ENCODE measurements at regions of chr3 and their contacts with region 1.

Region 1: DNA sequence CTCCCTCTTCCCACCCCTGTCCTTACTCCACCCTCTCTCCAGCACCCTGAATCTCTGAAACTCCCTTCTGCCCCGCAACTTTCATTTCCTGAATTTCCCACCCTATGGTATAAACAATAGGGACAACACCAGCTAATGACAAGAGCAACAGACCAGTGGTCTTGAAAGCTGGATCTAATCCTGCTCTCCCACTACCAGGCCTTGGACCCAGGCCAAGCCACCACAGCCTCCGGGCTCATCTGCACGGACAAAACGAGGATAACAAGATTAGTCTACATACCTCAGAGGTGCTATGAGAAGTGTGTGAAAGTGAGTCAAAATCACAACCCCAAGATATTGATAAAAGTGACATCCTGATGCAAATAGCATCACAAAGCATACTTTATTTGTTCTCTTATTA is 128.6 kb downstream of the ERC2 start:
- DNase-seq: no peak
- H3K4me3 ChIP-seq: no peak overlapping the region
- H3K27ac ChIP-seq: no peak overlapping the region
- H3K4me1 ChIP-seq: no peaks in the 10 kb centered on the region
- H3K27me3 ChIP-seq: no peaks in the 10 kb centered on the region
- CTCF ChIP-seq: no peak
- EP300 ChIP-seq: no peak
- POLR2A ChIP-seq: no peak

Region 2: GRCh38 chr3:56453011-56453410 is 113.3 kb after region 1 on chr3:
- intact Hi-C with region 1: loop called in 2 of 4 experiments (anchors 5 to 10 kb)
- DNase-seq: no peak
- H3K4me3 ChIP-seq: no peak overlapping the region
- H3K27ac ChIP-seq: no peak overlapping the region
- H3K4me1 ChIP-seq: no peaks in the 10 kb centered on the region
- H3K27me3 ChIP-seq: no peaks in the 10 kb centered on the region
- CTCF ChIP-seq: no peak
- EP300 ChIP-seq: no peak
- POLR2A ChIP-seq: no peak

Region 3: GRCh38 chr3:56494686-56495322 is 155.1 kb after region 1 on chr3:
- intact Hi-C with region 1: loop called in 1 of 4 experiments (anchors 10 kb)
- DNase-seq: peak; percentile 76 to 85 (median 80)
- H3K4me3 ChIP-seq: no peak overlapping the region
- H3K27ac ChIP-seq: no peak overlapping the region
- H3K4me1 ChIP-seq: no peaks in the 10 kb centered on the region
- H3K27me3 ChIP-seq: no peaks in the 10 kb centered on the region
- CTCF ChIP-seq: peak; percentile 74 to 82 (median 81)
- EP300 ChIP-seq: no peak
- POLR2A ChIP-seq: no peak

Measured in ovary (tissue), 10 donors.